ENCODE measurements at regions of chr9 and their contacts with region 1.

Region 1: GRCh38 chr9:71806901-71807307 is 38.6 kb upstream of the CEMIP2 start:
- DNase-seq: peak; percentile 67
- ATAC-seq: peak; percentile 99
- H3K4me3 ChIP-seq: no peak overlapping the region
- H3K27ac ChIP-seq: no peak overlapping the region
- H3K4me1 ChIP-seq: peaks cover 7% of the 10 kb centered on the region; the same call in 1 of the 2 replicates
- H3K27me3 ChIP-seq: no peaks in the 10 kb centered on the region
- CTCF ChIP-seq: peak; percentile 93
- EP300 ChIP-seq: no peak
- POLR2A ChIP-seq: no peak
- RAD21 ChIP-seq: peak; percentile 51; the same call in 1 of the 2 replicates

Region 2: DNA sequence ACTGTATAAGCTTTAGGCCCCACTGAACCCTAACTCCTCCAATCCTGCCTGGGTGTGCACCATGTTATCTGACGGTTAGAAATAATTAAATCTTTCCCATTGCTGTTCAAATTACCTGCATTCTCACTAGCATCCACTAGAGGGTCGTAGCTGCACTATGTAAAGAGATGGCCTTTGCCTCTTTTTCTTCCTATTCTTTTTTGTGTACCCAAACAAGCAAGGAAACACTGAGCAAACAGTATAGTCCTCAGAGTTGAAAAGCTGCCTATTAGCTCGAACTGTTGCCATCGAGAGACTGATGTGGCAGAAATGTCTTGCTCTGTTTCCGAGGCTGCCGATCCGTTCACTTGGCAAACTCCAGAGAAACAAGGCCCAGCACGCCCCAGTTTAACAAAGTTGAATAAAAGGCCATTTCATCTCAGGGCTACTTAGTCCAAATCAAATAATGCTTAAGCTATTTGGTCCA is 521.7 kb before region 1 on chr9:
- CTCF ChIA-PET with region 1: no interaction called
- POLR2A ChIA-PET with region 1: no interaction called
- in situ Hi-C with region 1: loop called (anchors 25 kb)
- intact Hi-C with region 1: no loop called
- DNase-seq: peak; percentile 62
- ATAC-seq: peak; percentile 91
- H3K4me3 ChIP-seq: no peak overlapping the region
- H3K27ac ChIP-seq: no peak overlapping the region
- H3K4me1 ChIP-seq: peaks cover 17% of the 10 kb centered on the region
- H3K27me3 ChIP-seq: no peaks in the 10 kb centered on the region
- CTCF ChIP-seq: peak; percentile 87
- EP300 ChIP-seq: no peak
- POLR2A ChIP-seq: no peak
- RAD21 ChIP-seq: 0 out of 2 replicates have a peak, but pooled peaks have one; percentile 36

Region 3: DNA sequence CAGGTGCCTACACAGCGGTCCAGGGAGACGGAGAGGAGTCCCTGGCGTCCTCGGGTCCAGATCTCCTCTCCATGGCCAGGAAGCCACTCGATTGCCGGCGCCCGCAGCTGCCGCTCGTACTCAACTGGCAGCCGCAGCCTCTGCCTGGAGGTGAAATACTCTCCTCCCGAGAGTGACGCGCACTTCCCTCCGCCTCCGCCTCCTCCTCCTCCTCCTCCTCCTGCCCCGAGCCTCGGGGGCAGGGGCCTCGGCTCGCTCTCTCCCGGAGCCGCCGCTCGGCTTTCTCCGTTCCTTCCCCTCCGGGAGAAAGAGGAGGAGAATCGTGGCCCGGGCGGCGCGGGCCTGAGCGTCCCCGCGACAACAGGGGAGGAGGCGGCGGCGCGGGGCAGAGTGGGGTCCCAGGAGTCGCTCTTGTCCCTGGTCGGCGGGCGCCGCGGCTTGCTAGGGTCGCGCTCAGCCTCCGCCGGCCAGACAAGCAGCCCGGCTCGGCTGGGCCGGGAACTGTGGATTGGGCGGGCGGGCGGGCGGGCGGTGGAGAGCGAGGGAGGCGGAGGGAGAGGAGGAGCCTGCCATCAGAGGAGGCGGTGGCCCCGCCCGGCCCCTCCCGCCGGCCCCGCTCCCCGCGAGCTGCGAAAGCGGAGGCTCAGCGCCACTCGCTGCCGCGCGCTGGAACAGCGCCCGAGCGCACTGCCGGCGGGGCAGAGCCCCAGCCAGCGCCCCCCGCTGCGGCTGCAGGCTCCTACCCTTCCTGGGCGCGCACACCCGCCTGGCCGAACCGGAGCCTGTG is 38.3 kb before region 1 on chr9 and contains the start of gene CEMIP2:
- CTCF ChIA-PET with region 1: no interaction called
- POLR2A ChIA-PET with region 1: no interaction called
- in situ Hi-C with region 1: no loop called
- intact Hi-C with region 1: no loop called
- DNase-seq: peak; percentile 71
- ATAC-seq: peak; percentile 87
- H3K4me3 ChIP-seq: peak within 1 kb of the TSS; percentile 90 to 99 (median 98)
- H3K27ac ChIP-seq: peak within 1 kb of the TSS; percentile 92
- H3K4me1 ChIP-seq: peaks cover 31% of the 10 kb centered on the region
- H3K27me3 ChIP-seq: peaks cover 0 to 12% of the 10 kb centered on the region in 2 experiments; a peak in 1 of 5 replicates
- CTCF ChIP-seq: peak; percentile 73
- EP300 ChIP-seq: no peak; a peak in 1 of 4 replicates
- POLR2A ChIP-seq: peak; percentile 97 to 98
- RAD21 ChIP-seq: peak; percentile 94
- total RNA-seq, gene CEMIP2: 52.7 and 94.3 TPM in 2 replicates

Region 4: DNA sequence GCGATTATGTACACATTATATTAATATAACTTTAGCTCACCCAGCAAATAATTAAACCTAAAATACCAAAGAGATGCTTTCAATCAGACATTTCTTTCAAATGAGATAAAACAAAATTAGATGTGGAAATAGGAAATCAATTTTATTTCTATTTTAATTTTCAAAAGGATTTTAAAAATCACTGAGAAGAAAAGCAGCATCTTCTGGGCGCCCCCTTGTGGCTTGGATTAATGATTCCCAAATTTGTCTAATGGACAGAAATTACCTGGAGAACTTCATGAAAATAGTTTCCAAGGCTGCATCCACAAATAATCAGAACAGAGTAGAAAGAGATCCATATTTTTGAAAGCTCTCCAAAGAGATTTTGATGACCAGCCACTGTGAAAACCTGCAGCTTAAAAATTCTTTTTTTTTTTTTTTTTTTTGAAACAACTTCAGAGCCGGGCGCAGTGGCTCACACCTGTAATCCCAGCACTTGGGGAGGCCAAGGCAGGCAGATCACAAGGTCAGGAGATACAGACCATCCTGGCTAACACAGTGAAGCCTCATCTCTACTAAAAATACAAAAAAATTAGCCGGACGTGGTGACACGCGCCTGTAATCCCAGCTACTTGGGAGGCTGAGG is 12.3 kb after region 1 on chr9:
- CTCF ChIA-PET with region 1: interaction called, 11 read pairs
- POLR2A ChIA-PET with region 1: no interaction called
- in situ Hi-C with region 1: no loop called
- intact Hi-C with region 1: no loop called
- DNase-seq: peak; percentile 16
- ATAC-seq: no peak
- H3K4me3 ChIP-seq: no peak overlapping the region
- H3K27ac ChIP-seq: no peak overlapping the region
- H3K4me1 ChIP-seq: peaks cover 14% of the 10 kb centered on the region
- H3K27me3 ChIP-seq: no peaks in the 10 kb centered on the region
- CTCF ChIP-seq: peak; percentile 50
- EP300 ChIP-seq: no peak
- POLR2A ChIP-seq: no peak
- RAD21 ChIP-seq: no peak

Region 5: DNA sequence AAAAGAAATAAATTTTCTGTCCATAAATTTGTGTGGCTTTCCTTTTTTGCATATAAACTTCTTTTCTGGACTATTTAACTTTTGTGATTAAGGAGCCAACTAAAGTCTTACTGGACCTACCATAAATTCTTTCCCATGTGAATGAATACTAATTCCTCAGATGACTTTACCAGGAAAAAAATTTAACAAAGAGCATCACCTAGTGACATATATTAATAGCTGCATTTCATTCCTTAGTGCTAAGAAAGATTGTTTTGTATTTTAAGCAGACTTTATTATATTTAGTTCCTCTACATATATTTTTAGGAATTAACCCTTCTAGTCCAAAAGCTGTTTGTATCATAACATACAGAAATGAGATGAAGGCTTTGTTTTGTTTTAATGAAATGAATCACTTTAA is 168.9 kb after region 1 on chr9:
- CTCF ChIA-PET with region 1: no interaction called
- POLR2A ChIA-PET with region 1: no interaction called
- in situ Hi-C with region 1: no loop called
- intact Hi-C with region 1: loop called (anchors 2 kb)
- DNase-seq: no peak
- ATAC-seq: no peak
- H3K4me3 ChIP-seq: no peak overlapping the region
- H3K27ac ChIP-seq: no peak overlapping the region
- H3K4me1 ChIP-seq: no peaks in the 10 kb centered on the region
- H3K27me3 ChIP-seq: no peaks in the 10 kb centered on the region
- CTCF ChIP-seq: peak; percentile 19; the same call in 1 of the 2 replicates
- EP300 ChIP-seq: no peak
- POLR2A ChIP-seq: no peak
- RAD21 ChIP-seq: no peak

Region 6: DNA sequence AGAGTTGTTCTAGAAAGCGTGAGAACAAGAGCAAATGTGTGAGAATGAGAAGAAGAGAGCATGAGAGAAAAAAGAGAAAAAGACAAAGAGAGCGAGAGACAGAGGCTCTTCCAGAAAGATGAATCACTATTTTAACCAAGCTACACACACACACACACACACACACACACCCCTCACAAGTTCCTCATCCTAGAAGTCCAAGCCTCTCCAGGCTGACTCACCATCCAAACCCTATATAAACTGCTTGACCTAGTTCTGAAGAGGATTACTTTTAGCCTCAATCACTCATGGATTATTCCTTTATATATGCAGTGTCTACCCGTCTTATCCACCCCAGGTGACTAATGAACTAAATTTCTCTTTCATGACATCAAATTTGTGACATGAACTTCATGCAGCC is 215.9 kb after region 1 on chr9:
- CTCF ChIA-PET with region 1: interaction called, 22 read pairs
- POLR2A ChIA-PET with region 1: no interaction called
- in situ Hi-C with region 1: no loop called
- intact Hi-C with region 1: loop called (anchors 1 kb)
- DNase-seq: no peak
- ATAC-seq: no peak
- H3K4me3 ChIP-seq: no peak overlapping the region
- H3K27ac ChIP-seq: no peak overlapping the region
- H3K4me1 ChIP-seq: peaks cover 11% of the 10 kb centered on the region
- H3K27me3 ChIP-seq: no peaks in the 10 kb centered on the region
- CTCF ChIP-seq: no peak
- EP300 ChIP-seq: no peak
- POLR2A ChIP-seq: no peak
- RAD21 ChIP-seq: no peak